Naive thymus-derived CD8-positive, alpha-beta T cell (primary cell): ENCODE measurements at regions of chr10 and their contacts with region 1.

Region 1: GRCh38 chr10:102394079-102394800 is 1.3 kb upstream of the NFKB2 start:
- DNase-seq: peak; percentile 96 to 100 (median 99)
- ATAC-seq: peak; percentile 77 to 80
- H3K4me3 Mint-ChIP-seq: peak overlapping the region; percentile 93 to 98 (median 96)
- H3K27ac Mint-ChIP-seq: peak overlapping the region; percentile 92 to 100 (median 100)
- H3K4me1 Mint-ChIP-seq: peaks cover 13 to 46% (median 41%) of the 10 kb centered on the region in 4 donors
- H3K27me3 Mint-ChIP-seq: no peaks in the 10 kb centered on the region

Region 2: GRCh38 chr10:102310361-102311024 is 83.7 kb before region 1 on chr10:
- POLR2A ChIA-PET with region 1: no interaction called
- DNase-seq: no peak
- ATAC-seq: no peak
- H3K4me3 Mint-ChIP-seq: no peak overlapping the region
- H3K27ac Mint-ChIP-seq: peak overlapping the region in 1 of 10 donors; percentile 10
- H3K4me1 Mint-ChIP-seq: peaks cover 17 to 57% (median 41%) of the 10 kb centered on the region in 4 donors
- H3K27me3 Mint-ChIP-seq: no peaks in the 10 kb centered on the region

Region 3: DNA sequence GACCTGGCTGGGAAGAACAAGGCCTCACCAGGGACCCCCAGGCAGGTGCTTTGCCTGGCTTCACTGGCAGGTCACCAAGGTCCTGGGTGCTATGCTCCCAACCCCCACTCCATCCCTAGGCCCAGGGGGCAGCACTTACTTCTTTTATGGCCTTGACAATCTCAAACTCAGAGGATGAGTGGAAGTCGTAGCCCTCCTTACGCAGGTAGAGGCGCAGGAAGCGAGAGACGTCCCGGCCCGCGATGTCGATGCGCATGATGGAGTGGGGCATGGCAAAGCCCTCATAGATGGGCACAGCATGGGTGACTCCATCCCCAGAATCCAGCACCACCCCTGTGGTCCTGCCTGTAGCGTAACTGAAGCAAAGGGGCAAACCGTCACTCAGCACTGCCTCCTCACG is 89.8 kb after region 1 on chr10:
- POLR2A ChIA-PET with region 1: interaction called, 19 read pairs
- DNase-seq: no peak
- ATAC-seq: no peak
- H3K4me3 Mint-ChIP-seq: no peak overlapping the region
- H3K27ac Mint-ChIP-seq: no peak overlapping the region
- H3K4me1 Mint-ChIP-seq: peaks cover 1 to 3% (median 2%) of the 10 kb centered on the region in 4 donors
- H3K27me3 Mint-ChIP-seq: no peaks in the 10 kb centered on the region

Region 4: DNA sequence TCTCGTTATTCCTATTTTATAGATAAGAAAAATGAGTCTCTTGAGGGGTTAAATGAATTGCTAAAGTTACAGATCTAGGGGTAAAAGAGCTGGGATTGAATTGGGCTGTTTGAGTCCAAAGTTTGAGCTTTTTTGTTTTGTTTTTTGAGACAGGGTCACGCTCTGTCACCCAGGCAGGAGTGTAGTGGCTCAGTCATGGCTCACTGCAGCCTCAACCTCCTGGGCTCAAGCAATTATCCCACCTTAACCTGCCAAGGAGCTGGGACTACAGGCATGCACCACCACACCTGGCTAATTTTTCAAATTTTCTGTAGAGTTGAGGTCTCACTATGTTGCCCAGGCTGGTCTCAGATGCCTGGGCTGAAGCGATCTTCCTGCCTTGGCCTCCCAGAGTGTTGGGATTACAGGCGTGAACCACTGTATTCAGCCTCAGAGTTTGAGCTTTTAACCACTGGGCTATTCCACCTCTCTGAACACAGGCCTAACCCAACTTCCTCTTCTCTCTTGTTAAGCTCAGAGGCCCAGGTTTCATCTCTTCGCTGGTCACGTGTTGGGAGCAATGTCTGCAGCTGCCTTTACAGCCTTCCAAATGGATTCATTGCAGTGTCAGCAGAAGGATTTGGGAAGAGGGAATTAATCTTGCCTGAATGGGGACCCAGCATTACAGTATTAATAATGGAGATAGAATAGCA is 117.5 kb after region 1 on chr10:
- POLR2A ChIA-PET with region 1: no interaction called
- DNase-seq: no peak
- ATAC-seq: peak in 1 of 2 donors; percentile 56
- H3K4me3 Mint-ChIP-seq: peak overlapping the region in 1 of 10 donors; percentile 14
- H3K27ac Mint-ChIP-seq: peak overlapping the region; percentile 11 to 77 (median 53)
- H3K4me1 Mint-ChIP-seq: peaks cover 14 to 28% (median 22%) of the 10 kb centered on the region in 4 donors
- H3K27me3 Mint-ChIP-seq: no peaks in the 10 kb centered on the region